ENCODE measurements at regions of chr18 and their contacts with region 1.

Region 1: DNA sequence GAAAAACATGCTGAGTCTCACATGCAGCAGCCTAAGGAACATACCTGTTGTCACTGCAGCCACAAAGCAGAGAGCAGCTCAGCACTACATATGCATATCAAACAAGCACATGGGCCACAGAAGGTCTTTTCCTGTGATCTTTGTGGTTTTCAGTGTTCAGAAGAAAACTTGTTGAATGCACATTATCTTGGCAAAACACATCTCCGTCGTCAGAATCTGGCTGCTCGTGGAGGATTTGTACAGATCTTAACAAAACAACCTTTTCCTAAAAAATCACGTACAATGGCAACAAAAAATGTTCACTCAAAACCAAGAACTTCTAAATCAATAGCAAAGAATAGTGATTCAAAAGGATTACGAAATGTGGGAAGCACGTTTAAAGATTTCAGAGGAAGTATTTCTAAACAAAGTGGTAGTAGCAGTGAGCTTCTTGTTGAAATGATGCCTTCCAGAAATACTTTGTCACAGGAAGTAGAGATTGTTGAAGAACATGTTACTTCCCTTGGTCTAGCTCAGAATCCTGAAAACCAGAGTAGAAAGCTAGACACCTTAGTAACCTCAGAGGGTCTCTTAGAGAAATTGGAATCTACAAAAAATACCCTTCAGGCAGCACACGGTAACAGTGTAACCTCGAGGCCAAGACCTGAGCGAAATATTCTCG is 34.1 kb downstream of the ZNF407 start:
- DNase-seq: no peak
- H3K4me3 ChIP-seq: no peak overlapping the region
- H3K4me1 ChIP-seq: no peaks in the 10 kb centered on the region
- H3K27me3 ChIP-seq: no peaks in the 10 kb centered on the region

Region 2: DNA sequence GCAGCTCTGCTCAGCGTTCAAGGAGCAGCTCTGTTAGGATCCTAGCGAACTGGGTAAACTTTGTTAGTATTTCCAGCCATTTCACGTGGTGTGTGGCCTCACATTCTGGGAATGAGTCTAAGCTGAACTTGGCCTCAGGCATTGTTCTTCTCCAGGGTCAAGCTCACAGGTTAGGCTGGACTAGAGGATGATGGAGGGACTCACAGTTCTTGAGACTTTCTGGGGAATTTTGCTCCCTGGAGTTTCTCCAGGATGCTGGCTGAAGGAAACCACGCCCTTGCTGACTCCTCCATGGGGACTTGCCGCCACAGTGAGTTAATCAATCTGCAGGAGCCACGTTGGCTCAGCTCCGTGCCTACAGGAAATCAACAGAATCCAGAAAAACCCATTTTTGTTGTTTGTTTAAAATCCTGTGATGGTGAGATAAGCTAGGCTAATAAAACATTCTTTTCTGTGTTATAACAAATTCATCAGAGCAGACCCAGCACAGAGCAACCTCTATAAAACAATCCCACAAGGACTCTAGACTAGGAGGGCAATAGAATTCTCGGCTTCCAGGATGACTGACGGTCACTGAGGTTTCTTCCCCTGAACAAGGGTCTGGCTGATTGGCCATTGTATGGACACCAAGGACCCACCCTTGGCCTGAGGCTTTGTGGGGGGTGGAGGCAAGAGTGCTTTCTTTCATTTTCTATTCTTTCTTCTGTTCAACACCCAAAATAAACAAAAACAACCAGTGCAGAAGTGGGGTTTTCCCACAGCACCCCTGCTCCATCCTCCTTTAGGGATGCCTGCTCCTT is 84.8 kb before region 1 on chr18:
- in situ Hi-C with region 1: no loop called
- DNase-seq: no peak
- H3K4me3 ChIP-seq: no peak overlapping the region
- H3K4me1 ChIP-seq: no peaks in the 10 kb centered on the region
- H3K27me3 ChIP-seq: no peaks in the 10 kb centered on the region

Region 3: DNA sequence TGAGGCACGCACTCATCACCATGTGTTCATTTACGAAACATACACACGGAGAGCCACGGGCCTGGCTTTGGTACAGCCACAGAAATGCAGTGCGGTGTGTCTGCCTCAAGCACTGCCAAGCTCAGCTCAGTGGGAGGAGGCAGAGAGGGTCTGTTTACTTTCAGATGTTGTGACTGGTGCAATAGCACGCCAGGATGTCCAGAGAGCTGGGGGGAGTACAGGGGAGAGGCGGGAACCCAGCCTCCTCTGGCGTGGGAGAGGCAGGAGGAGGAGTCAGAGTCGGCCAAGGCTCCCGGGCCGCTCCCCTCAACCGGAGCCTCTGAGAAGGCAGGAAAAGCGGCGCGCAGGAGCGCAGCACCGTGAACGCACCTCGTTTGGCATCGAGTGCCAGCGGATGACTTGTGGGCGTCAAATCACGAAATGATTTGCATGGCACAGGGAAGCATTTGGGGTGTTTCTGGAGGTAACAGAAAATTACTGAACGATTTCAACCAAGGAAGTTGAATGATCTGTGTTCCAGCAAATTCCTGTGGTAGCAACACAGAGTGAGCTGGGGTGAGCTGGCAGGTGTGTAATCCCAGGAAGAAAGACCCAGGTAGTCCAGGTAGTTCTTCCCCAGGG is 1720.3 kb after region 1 on chr18:
- in situ Hi-C with region 1: loop called (anchors 25 kb)
- DNase-seq: no peak
- H3K4me3 ChIP-seq: no peak overlapping the region
- H3K4me1 ChIP-seq: no peaks in the 10 kb centered on the region
- H3K27me3 ChIP-seq: no peaks in the 10 kb centered on the region